Calu3 (cell line): ENCODE measurements at regions of chr5 and their contacts with region 1.

Region 1: GRCh38 chr5:63963080-63963735 is 963 bp upstream of the HTR1A start:
- DNase-seq: peak; percentile 44
- H3K4me3 Mint-ChIP-seq: no peak overlapping the region
- H3K27ac Mint-ChIP-seq: no peak overlapping the region
- H3K4me1 Mint-ChIP-seq: no peaks in the 10 kb centered on the region
- H3K27me3 Mint-ChIP-seq: no peaks in the 10 kb centered on the region
- CTCF ChIP-seq: peak; percentile 30

Region 2: GRCh38 chr5:62791059-62791458 is 1172.1 kb before region 1 on chr5:
- CTCF ChIA-PET with region 1: no interaction called
- intact Hi-C with region 1: loop called (anchors 5 kb)
- DNase-seq: peak; percentile 24
- H3K4me3 Mint-ChIP-seq: no peak overlapping the region
- H3K27ac Mint-ChIP-seq: no peak overlapping the region
- H3K4me1 Mint-ChIP-seq: no peaks in the 10 kb centered on the region
- H3K27me3 Mint-ChIP-seq: peaks cover 9% of the 10 kb centered on the region
- CTCF ChIP-seq: peak; percentile 40

Region 3: GRCh38 chr5:63125862-63126261 is 837.3 kb before region 1 on chr5:
- CTCF ChIA-PET with region 1: no interaction called
- intact Hi-C with region 1: loop called (anchors 10 kb)
- DNase-seq: peak; percentile 14
- H3K4me3 Mint-ChIP-seq: no peak overlapping the region
- H3K27ac Mint-ChIP-seq: peak overlapping the region; percentile 46
- H3K4me1 Mint-ChIP-seq: peaks cover 33% of the 10 kb centered on the region
- H3K27me3 Mint-ChIP-seq: no peaks in the 10 kb centered on the region
- CTCF ChIP-seq: peak; percentile 40

Region 4: GRCh38 chr5:64000096-64000495 is 36.9 kb after region 1 on chr5:
- CTCF ChIA-PET with region 1: no interaction called
- intact Hi-C with region 1: no loop called
- DNase-seq: no peak
- H3K4me3 Mint-ChIP-seq: no peak overlapping the region
- H3K27ac Mint-ChIP-seq: no peak overlapping the region
- H3K4me1 Mint-ChIP-seq: no peaks in the 10 kb centered on the region
- H3K27me3 Mint-ChIP-seq: no peaks in the 10 kb centered on the region
- CTCF ChIP-seq: no peak